Cardiac septum (tissue), 1 donor: ENCODE measurements at regions of chr1 and their contacts with region 1.

Region 1: GRCh38 chr1:47997289-47998200 is at the start of gene TRABD2B:
- DNase-seq: peak; percentile 91
- total RNA-seq, gene TRABD2B: 3.4 TPM

Region 2: DNA sequence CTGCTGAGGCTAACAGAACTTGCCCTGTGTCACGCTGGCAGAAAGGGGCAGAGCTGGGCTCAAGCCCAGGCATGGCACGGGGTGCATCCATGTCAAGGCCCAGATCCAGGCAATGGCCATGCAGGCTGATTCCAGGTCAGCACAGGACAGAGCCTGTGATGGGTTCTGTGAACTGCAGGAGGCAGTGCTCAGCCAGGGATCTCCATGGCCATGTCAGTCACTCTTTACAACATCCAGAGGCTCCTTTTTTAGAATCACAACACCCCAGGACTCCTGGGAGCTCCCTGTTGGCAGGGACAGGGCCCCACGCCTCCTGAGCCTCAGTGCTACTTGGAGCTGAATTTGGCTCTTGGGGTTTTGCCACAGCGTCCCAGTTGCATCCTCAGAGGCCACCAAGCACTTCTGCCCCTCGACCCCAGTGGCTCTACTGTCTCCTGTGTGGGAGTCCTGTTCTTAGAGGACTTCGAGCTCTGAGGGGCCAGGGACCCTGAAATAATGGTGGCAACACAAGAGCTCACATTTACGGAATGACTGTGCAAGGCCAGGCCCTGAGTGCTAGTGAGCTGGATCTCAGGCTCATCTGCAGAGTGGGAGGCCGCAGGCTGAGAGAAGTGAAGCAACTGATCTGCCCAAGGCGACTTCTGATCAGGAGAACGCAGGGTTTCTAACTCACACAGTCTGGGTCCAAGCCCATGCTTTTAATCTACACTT is 211.8 kb before region 1 on chr1:
- intact Hi-C with region 1: loop called (anchors 10 kb)
- DNase-seq: no peak

Region 3: GRCh38 chr1:47978486-47978885 is 19.1 kb before region 1 on chr1:
- intact Hi-C with region 1: no loop called
- DNase-seq: no peak